ENCODE measurements at regions of chr5 and their contacts with region 1.

Region 1: GRCh38 chr5:16456103-16456832 is 9.3 kb downstream of the ZNF622 start:
- DNase-seq: peak; percentile 84
- H3K4me3 ChIP-seq: no peak overlapping the region
- H3K27ac ChIP-seq: no peak overlapping the region
- H3K4me1 ChIP-seq: no peaks in the 10 kb centered on the region
- H3K27me3 ChIP-seq: no peaks in the 10 kb centered on the region
- CTCF ChIP-seq: peak; percentile 78

Region 2: DNA sequence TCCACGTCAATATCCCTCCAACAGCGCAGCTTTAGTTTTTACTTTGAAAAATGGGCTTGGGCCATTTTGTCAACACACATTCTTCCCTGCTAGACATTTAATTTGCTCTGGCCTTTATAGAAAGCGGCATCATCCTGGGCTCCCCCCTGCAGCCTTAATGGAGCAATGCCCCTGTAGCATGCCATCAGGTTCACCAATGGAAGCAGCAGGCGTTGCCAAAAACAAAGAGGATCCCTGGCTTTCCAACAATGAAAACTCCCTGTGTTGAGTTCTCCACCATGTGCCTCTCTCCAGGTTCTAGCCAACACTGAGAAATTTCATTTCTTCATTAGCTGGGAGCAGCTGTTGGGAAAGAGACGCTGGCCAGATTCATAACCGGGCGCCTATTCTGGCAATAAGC is 130.1 kb before region 1 on chr5:
- CTCF ChIA-PET with region 1: no interaction called
- POLR2A ChIA-PET with region 1: no interaction called
- intact Hi-C with region 1: loop called (anchors 5 kb)
- DNase-seq: peak; percentile 64
- H3K4me3 ChIP-seq: no peak overlapping the region
- H3K27ac ChIP-seq: peak overlapping the region; percentile 51
- H3K4me1 ChIP-seq: no peaks in the 10 kb centered on the region
- H3K27me3 ChIP-seq: no peaks in the 10 kb centered on the region
- CTCF ChIP-seq: no peak

Region 3: DNA sequence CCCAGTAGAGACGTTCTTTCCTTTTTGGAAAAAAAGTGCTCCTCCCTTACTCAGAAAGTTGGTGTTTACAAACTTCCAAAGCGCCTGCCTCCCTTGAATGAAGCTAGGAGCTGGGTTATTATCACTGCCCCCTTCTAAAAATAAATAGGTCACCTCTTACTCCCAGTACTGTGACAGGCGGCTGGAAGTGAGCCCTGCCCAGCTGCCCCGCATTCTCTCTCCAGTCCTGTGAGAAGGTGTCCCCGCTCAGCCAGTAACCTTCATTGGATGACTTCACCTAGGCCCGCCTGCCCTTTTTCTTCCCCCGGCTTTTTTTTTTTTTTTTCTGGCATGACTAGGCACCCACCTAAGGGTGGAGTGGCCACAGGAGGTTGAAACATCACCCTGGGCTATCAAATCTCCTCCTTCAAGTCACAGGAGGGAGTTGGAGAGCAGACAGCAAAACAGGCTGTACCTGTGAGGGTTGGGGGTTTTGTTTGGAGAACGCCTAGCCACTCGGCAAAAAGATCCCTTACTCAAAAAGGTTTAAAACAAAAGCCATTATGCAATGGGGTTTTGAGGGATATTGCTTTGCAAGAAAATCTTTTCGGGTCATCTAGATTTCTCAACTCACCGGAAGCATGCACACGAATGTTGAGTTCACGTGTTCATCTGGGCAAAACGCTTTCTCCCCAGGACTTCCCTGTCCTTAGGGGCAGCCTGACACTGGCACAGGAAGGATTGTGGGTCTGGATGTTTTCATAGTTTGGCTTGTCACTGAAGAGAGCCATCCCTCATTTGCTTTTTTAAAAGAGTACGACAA is 52.7 kb after region 1 on chr5:
- CTCF ChIA-PET with region 1: no interaction called
- POLR2A ChIA-PET with region 1: no interaction called
- intact Hi-C with region 1: no loop called
- DNase-seq: no peak
- H3K4me3 ChIP-seq: no peak overlapping the region
- H3K27ac ChIP-seq: no peak overlapping the region
- H3K4me1 ChIP-seq: peaks cover 5% of the 10 kb centered on the region
- H3K27me3 ChIP-seq: no peaks in the 10 kb centered on the region
- CTCF ChIP-seq: no peak

Region 4: GRCh38 chr5:16644301-16644889 is 188.1 kb after region 1 on chr5:
- CTCF ChIA-PET with region 1: no interaction called
- POLR2A ChIA-PET with region 1: no interaction called
- intact Hi-C with region 1: no loop called
- DNase-seq: no peak
- H3K4me3 ChIP-seq: no peak overlapping the region
- H3K27ac ChIP-seq: no peak overlapping the region
- H3K4me1 ChIP-seq: no peaks in the 10 kb centered on the region
- H3K27me3 ChIP-seq: no peaks in the 10 kb centered on the region
- CTCF ChIP-seq: no peak

Region 5: DNA sequence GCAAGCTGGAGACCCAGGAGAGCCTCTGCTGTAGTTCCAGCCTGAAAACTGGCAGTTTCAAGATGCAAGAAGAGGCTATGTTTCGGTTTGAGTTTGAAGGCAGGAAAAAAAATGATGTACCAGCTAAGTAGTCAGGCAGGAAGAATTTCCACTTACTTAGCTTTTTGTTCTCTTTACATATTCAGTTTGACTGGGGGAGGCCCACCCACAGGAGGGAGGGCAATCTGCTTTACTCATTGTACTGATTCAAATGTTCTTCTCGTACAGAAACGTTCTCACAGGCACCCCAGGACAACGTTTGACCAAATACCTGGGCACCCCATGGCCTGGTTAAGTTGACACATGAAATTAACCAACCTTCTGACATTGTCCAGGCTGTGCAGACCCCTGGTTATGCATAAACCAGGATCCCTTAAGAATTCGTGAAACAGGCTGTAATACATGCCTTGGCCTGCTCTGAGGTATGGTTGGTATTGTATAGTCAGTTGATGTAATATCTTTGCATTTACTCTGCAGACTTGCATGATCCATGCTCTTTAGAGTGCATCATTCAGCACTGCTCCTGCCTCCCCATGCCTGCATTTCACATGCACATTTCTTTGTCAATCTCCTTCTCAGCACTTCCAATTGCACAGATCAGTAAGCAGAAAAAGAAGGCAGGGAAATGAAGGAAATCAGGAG is 1865.1 kb after region 1 on chr5:
- CTCF ChIA-PET with region 1: no interaction called
- POLR2A ChIA-PET with region 1: no interaction called
- intact Hi-C with region 1: no loop called
- DNase-seq: no peak
- H3K4me3 ChIP-seq: no peak overlapping the region
- H3K27ac ChIP-seq: no peak overlapping the region
- H3K4me1 ChIP-seq: no peaks in the 10 kb centered on the region
- H3K27me3 ChIP-seq: no peaks in the 10 kb centered on the region
- CTCF ChIP-seq: no peak

Measured in A673 (cell line).